A673 (cell line): ENCODE measurements at regions of chr15 and their contacts with region 1.

Region 1: GRCh38 chr15:60179786-60180391 is 175.8 kb downstream of the FOXB1 start:
- DNase-seq: peak; percentile 58
- H3K4me3 ChIP-seq: no peak overlapping the region
- H3K27ac ChIP-seq: no peak overlapping the region
- H3K4me1 ChIP-seq: no peaks in the 10 kb centered on the region
- H3K27me3 ChIP-seq: peaks cover 32% of the 10 kb centered on the region
- CTCF ChIP-seq: peak; percentile 92

Region 2: GRCh38 chr15:59725172-59725486 is 454.8 kb before region 1 on chr15:
- CTCF ChIA-PET with region 1: no interaction called
- POLR2A ChIA-PET with region 1: no interaction called
- intact Hi-C with region 1: loop called (anchors 10 kb)
- DNase-seq: no peak
- H3K4me3 ChIP-seq: no peak overlapping the region
- H3K27ac ChIP-seq: no peak overlapping the region
- H3K4me1 ChIP-seq: no peaks in the 10 kb centered on the region
- H3K27me3 ChIP-seq: peaks cover 11% of the 10 kb centered on the region
- CTCF ChIP-seq: no peak

Region 3: DNA sequence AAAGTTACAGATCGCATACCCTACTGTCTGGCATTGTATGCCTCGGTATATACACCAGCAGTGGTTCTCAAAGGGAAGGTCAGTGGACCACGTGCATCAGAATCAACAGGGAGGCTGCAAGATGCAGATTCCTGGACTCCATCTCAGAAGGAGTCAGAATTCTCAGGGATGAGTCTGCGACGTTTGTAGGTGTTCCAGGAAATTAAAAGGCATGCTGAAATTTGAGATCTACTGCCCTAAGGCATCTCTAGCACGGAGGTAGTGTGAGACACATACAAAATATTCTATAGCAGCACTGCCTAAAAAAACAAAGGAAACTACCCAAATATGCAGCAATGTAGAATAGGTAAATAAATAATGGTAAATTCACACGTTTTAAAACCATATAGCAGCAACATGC is 354.0 kb before region 1 on chr15:
- CTCF ChIA-PET with region 1: no interaction called
- POLR2A ChIA-PET with region 1: no interaction called
- intact Hi-C with region 1: no loop called
- DNase-seq: no peak
- H3K4me3 ChIP-seq: no peak overlapping the region
- H3K27ac ChIP-seq: no peak overlapping the region
- H3K4me1 ChIP-seq: no peaks in the 10 kb centered on the region
- H3K27me3 ChIP-seq: peaks cover 39% of the 10 kb centered on the region
- CTCF ChIP-seq: no peak

Region 4: DNA sequence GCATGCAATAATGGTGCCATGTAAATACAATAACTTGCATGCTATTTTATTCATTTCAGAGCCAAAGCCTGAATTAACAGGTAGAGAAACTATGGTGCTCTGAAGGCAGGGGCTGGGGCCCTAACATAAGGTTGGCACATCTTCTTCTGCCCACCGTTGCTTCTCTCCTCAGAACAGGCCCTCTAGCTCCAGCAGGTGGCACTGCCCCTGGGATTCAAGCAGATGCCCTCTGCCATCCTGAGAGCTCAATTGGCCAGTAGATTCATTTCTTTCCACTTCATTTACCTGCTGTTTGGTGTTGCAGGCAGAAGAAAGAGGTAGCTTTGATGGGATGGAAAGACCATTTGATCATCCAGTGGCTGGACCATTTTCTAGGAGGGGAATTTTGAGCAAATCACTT is 45.3 kb before region 1 on chr15:
- CTCF ChIA-PET with region 1: no interaction called
- POLR2A ChIA-PET with region 1: no interaction called
- intact Hi-C with region 1: no loop called
- DNase-seq: no peak
- H3K4me3 ChIP-seq: no peak overlapping the region
- H3K27ac ChIP-seq: no peak overlapping the region
- H3K4me1 ChIP-seq: no peaks in the 10 kb centered on the region
- H3K27me3 ChIP-seq: peaks cover 42% of the 10 kb centered on the region
- CTCF ChIP-seq: peak; percentile 44